ENCODE measurements at regions of chr2 and their contacts with region 1.

Region 1: DNA sequence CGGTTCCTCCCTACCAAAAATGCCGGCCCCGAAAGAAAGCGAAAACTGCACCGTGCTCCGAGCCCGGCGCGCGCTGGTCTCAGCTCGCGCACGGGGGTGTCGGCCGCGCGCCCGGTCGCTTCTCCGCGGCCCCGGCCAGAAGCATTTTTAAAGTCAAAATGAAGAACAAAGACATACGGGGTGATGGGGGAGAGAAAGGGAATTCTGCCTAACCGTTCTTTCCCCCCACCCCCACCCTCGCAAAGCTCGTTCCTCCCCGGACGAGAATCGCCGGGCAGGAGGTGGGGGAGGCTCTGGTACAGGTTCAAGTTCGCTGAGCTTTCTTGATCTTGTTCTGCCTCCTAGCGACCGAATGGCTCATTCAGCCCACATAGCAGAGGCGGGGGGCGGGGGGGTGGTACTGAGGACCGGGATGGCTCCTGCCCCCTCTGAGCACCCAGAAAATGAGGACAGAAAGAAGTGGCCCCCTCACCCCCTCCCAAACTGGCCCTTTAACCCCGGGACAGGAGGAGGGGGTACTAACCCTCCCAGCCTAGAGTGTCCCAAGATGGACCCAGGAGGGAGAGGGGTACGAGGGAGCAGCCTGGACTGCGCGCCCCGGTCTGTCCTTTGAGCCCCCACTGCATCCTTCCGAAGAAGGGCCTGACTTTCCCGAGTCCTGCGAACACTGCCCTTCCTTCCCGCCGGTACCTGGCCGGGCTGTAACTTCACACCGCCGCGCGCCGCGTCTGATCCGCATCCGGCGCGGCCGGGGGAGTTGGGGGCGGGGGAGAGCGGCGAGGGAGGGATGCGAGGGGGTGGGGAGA is 3.1 kb downstream of the BCL11A start:
- DNase-seq: peak; percentile 83 to 90
- H3K4me3 ChIP-seq: peak overlapping the region; percentile 63
- H3K4me1 ChIP-seq: peaks cover 18% of the 10 kb centered on the region
- H3K27me3 ChIP-seq: no peaks in the 10 kb centered on the region

Region 2: GRCh38 chr2:59276033-59276432 is 1274.3 kb before region 1 on chr2:
- in situ Hi-C with region 1: loop called (anchors 25 kb)
- DNase-seq: peak in 1 of 2 experiments; percentile 54
- H3K4me3 ChIP-seq: no peak overlapping the region
- H3K4me1 ChIP-seq: no peaks in the 10 kb centered on the region
- H3K27me3 ChIP-seq: 0 out of 2 replicates have a peak, but pooled peaks cover 3% of the 10 kb centered on the region

Region 3: GRCh38 chr2:60498816-60499429 is 51.5 kb before region 1 on chr2:
- in situ Hi-C with region 1: loop called (anchors 10 kb)
- DNase-seq: no peak
- H3K4me3 ChIP-seq: no peak overlapping the region
- H3K4me1 ChIP-seq: no peaks in the 10 kb centered on the region
- H3K27me3 ChIP-seq: no peaks in the 10 kb centered on the region

Region 4: DNA sequence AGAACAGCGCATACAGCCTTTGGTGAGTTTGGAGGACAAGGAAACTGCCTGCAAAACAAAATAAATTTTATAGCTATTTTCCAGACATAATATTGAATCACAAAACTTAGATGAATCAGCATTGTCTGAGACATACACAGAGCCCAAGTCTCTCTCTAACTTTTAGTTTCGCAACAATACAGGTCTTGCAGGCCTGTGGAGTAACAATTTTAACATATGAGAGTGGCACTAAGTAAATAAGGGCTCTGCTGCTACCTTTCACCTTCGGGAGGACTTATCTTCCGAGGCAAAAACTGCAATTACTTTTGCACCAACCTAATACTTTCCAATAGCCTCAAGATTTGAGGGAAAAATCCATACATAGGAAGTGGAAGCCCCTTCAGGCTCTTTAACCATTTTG is 411.1 kb after region 1 on chr2:
- in situ Hi-C with region 1: no loop called
- DNase-seq: no peak
- H3K4me3 ChIP-seq: no peak overlapping the region
- H3K4me1 ChIP-seq: no peaks in the 10 kb centered on the region
- H3K27me3 ChIP-seq: no peaks in the 10 kb centered on the region